ENCODE measurements at regions of chr15 and their contacts with region 1.

Region 1: GRCh38 chr15:65184868-65185738 is at the start of gene CLPX:
- DNase-seq: peak; percentile 95
- H3K4me3 Mint-ChIP-seq: peak within 1 kb of the TSS; percentile 93
- H3K27ac Mint-ChIP-seq: peak within 1 kb of the TSS; percentile 92
- H3K4me1 Mint-ChIP-seq: peaks cover 30% of the 10 kb centered on the region
- H3K27me3 Mint-ChIP-seq: no peaks in the 10 kb centered on the region

Region 2: GRCh38 chr15:65275728-65276126 is 90.6 kb after region 1 on chr15:
- CTCF ChIA-PET with region 1: interaction called, 10 read pairs
- DNase-seq: no peak
- H3K4me3 Mint-ChIP-seq: no peak overlapping the region
- H3K27ac Mint-ChIP-seq: no peak overlapping the region
- H3K4me1 Mint-ChIP-seq: peaks cover 25% of the 10 kb centered on the region
- H3K27me3 Mint-ChIP-seq: no peaks in the 10 kb centered on the region

Region 3: DNA sequence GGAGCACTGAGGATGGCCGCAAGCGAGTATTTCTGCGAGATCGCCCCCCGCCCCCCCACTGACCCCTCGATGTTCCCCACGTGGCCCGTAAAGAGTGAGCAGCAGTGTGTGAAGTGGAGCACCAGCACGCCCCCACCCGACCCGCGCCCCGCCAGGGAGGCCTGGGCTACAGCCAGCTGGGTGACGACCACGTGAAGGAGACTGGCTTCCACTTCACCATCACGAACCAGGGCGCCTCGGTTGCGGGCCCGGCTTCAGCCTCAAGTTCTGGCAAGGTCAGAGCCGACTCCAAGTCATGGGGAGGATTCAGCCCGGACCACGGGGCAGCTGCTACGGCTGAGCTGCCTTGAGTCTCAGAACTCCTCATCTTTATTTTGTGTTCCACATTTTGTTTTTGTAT is 117.0 kb after region 1 on chr15:
- CTCF ChIA-PET with region 1: interaction called, 17 read pairs
- DNase-seq: no peak
- H3K4me3 Mint-ChIP-seq: no peak overlapping the region
- H3K27ac Mint-ChIP-seq: no peak overlapping the region
- H3K4me1 Mint-ChIP-seq: peaks cover 43% of the 10 kb centered on the region
- H3K27me3 Mint-ChIP-seq: no peaks in the 10 kb centered on the region

Measured in activated naive CD4-positive, alpha-beta T cell treated with anti-CD3 and anti-CD28 coated beads, Interleukin-2, amount 10 ng/mL, durations not matched to agents 7 days and 5 days (primary cell).